Psoas muscle (tissue), 8 donors: ENCODE measurements at regions of chr13 and their contacts with region 1.

Region 1: GRCh38 chr13:74133657-74134201 is 475 bp downstream of the KLF12 start:
- DNase-seq: peak; percentile 81 to 92
- ATAC-seq: peak; percentile 71 to 77 (median 73)
- H3K4me3 ChIP-seq: peak overlapping the region; percentile 89
- H3K27ac ChIP-seq: peak overlapping the region; percentile 90
- H3K4me1 ChIP-seq: peaks cover 25% of the 10 kb centered on the region
- H3K27me3 ChIP-seq: no peaks in the 10 kb centered on the region
- CTCF ChIP-seq: no peak

Region 2: DNA sequence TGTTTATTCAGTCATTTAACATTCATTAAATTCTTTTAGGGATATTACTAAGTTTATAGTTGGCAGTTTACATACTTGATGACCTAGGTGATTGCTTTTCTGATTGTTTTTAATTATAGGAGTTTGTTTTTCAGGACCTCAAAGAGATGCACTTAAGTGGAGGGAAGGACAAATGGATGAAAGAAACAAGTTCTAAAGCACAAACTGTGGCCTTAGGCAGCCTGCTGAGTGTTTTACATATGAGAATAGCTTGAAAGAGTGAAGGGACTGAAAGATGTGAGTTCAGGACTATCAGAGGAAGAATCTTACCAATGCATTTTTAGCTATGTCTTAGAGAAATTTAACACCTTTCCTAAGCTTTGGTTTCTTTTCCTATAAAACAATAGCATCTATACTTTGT is 402.2 kb before region 1 on chr13:
- intact Hi-C with region 1: no loop called
- DNase-seq: no peak
- ATAC-seq: no peak
- H3K4me3 ChIP-seq: no peak overlapping the region
- H3K27ac ChIP-seq: no peak overlapping the region
- H3K4me1 ChIP-seq: no peaks in the 10 kb centered on the region
- H3K27me3 ChIP-seq: no peaks in the 10 kb centered on the region
- CTCF ChIP-seq: no peak

Region 3: DNA sequence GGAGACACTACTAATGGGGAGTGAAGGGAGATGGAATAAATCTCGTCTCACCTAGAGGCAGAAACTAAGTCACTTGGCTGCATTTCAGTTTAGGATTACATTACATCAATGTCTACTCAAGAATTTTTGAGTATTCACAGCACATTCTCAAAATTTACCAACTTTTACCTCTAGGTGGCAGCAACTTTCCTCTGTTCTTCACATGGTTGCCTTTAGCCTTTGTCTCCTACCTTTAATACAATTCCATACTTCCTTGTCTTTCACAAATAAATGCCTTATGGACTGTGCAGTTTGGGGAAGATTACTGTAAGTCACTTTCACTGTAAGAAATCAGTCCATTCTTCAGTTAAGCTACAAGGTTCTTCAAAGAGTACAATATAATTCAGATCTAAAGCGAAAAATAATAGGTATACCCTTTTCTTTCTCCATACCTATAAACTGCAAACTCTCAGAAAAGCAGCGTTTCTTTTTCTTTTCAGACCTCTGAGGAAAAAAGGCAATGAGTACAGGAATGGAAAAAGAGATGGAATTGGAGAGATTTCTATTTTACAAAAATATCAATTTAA is 378.9 kb before region 1 on chr13:
- intact Hi-C with region 1: loop called in 1 of 2 experiments (anchors 10 kb)
- DNase-seq: no peak
- ATAC-seq: peak; percentile 49 to 88 (median 62)
- H3K4me3 ChIP-seq: no peak overlapping the region
- H3K27ac ChIP-seq: no peak overlapping the region
- H3K4me1 ChIP-seq: no peaks in the 10 kb centered on the region
- H3K27me3 ChIP-seq: no peaks in the 10 kb centered on the region
- CTCF ChIP-seq: peak; percentile 73

Region 4: GRCh38 chr13:73765651-73766384 is 367.9 kb before region 1 on chr13:
- intact Hi-C with region 1: no loop called
- DNase-seq: peak; percentile 71 to 83
- ATAC-seq: peak; percentile 52 to 64 (median 59)
- H3K4me3 ChIP-seq: peak overlapping the region; percentile 45
- H3K27ac ChIP-seq: peak overlapping the region; percentile 73
- H3K4me1 ChIP-seq: peaks cover 31% of the 10 kb centered on the region
- H3K27me3 ChIP-seq: no peaks in the 10 kb centered on the region
- CTCF ChIP-seq: no peak

Region 5: DNA sequence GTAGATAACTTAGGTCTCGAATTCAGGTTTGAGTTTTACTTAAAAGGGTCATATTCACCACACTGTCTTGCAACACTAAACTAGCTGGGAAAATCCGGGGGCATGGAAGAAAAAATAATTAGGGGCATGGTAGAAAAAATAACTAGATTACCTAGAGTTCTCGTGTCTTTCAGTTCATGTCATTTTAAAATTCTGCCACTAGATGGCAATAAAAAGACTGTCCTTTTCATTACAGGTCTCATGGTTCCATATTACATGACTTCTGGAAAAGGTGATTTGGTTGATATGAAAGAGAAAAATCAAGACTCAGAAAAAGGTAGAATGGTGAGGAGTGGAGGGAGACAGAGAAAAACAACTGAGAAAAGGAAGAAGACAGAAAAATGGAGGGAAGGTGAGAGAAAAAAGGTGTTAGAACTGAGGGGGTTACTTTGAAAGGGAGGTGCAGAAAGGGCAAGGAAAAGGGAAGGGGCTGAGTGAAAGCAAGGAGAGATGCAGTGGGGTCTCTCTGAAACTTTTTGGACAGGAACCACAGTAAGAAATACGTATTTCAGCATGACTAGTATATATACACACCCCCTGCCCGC is 298.5 kb before region 1 on chr13:
- intact Hi-C with region 1: loop called (anchors 10 kb)
- DNase-seq: no peak
- ATAC-seq: peak in 2 of 4 donors; percentile 68 to 75
- H3K4me3 ChIP-seq: no peak overlapping the region
- H3K27ac ChIP-seq: no peak overlapping the region
- H3K4me1 ChIP-seq: peaks cover 4% of the 10 kb centered on the region
- H3K27me3 ChIP-seq: no peaks in the 10 kb centered on the region
- CTCF ChIP-seq: peak; percentile 70

Region 6: GRCh38 chr13:74062933-74063332 is 70.8 kb before region 1 on chr13:
- intact Hi-C with region 1: loop called in 1 of 2 experiments (anchors 2 kb)
- DNase-seq: peak; percentile 45 to 77
- ATAC-seq: peak; percentile 90 to 97 (median 96)
- H3K4me3 ChIP-seq: peak overlapping the region; percentile 53
- H3K27ac ChIP-seq: peak overlapping the region; percentile 83
- H3K4me1 ChIP-seq: peaks cover 43% of the 10 kb centered on the region
- H3K27me3 ChIP-seq: no peaks in the 10 kb centered on the region
- CTCF ChIP-seq: no peak

Region 7: DNA sequence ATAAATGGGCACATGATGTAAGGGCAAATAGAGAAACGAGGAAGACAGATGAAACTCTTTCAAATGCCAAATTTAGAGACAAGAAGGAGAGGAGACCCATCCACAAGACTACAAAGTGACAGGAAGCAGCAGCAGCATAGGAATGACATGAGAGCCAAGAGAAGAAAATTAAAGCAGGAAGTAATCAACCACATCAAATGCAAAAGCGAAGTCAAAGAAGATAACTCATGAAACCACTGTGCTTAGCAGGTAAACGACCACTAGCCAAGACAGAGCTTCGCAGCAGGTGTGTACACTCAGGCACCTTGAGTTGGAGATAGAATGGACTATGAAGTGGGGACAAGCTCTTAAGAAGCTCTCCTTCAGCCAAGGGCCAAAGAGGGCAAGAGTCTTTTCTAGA is 63.7 kb before region 1 on chr13:
- intact Hi-C with region 1: loop called in 1 of 2 experiments (anchors 10 kb)
- DNase-seq: no peak
- ATAC-seq: no peak
- H3K4me3 ChIP-seq: no peak overlapping the region
- H3K27ac ChIP-seq: no peak overlapping the region
- H3K4me1 ChIP-seq: peaks cover 28% of the 10 kb centered on the region
- H3K27me3 ChIP-seq: no peaks in the 10 kb centered on the region
- CTCF ChIP-seq: no peak